OCI-LY7 (cell line): ENCODE measurements at regions of chr4 and their contacts with region 1.

Region 1: DNA sequence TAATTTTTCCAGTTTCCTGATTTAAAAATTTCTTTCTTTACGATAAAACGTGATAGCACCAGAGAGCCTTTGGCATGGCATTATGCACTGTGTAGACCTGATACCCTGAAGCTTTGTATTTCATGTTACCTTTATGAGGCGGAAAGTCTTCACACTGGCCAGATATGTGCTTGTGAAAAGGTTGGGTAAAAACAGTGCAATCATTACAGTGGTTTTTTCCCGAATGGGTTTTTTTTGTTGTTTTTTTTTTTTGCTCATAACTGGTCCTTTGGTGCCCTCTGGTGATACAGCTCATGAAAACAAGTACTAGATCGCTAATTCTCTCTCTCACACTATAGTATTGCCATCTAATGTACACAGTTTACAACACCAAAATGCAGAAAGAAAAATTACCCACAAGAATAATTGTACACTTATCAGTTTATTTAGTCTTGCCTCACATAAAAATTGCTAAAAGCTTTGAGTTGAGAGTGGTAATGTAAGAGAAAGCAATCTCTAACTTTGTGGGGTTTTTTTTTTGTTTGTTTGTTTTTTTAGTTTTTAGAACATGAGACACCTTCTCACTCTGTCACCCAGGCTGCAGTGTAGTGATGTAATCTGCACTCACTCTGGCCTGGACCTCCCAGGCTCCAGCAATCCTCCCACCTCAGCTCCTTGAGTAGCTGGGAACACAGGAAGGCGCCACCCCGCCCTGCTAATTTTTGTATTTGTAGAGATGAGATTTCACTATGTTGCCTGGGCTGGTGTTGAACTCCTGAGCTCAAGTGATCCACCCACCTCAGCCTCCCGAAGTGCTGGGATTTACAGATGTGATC is 21.3 kb downstream of the SPCS3 start:
- DNase-seq: peak; percentile 63
- H3K4me3 ChIP-seq: no peak overlapping the region
- H3K27ac ChIP-seq: no peak overlapping the region
- H3K4me1 ChIP-seq: peaks cover 10% of the 10 kb centered on the region
- CTCF ChIP-seq: peak; percentile 91

Region 2: GRCh38 chr4:175560604-175561003 is 780.5 kb before region 1 on chr4:
- CTCF ChIA-PET with region 1: no interaction called
- POLR2A ChIA-PET with region 1: no interaction called
- intact Hi-C with region 1: loop called (anchors 1 kb)
- DNase-seq: peak; percentile 58
- H3K4me3 ChIP-seq: no peak overlapping the region
- H3K27ac ChIP-seq: no peak overlapping the region
- H3K4me1 ChIP-seq: peaks cover 8% of the 10 kb centered on the region
- CTCF ChIP-seq: peak; percentile 77

Region 3: GRCh38 chr4:175947117-175947722 is 393.9 kb before region 1 on chr4:
- CTCF ChIA-PET with region 1: interaction called, 4 read pairs
- POLR2A ChIA-PET with region 1: interaction called, 3 read pairs
- intact Hi-C with region 1: loop called (anchors 1 kb)
- DNase-seq: peak; percentile 51
- H3K4me3 ChIP-seq: no peak overlapping the region
- H3K27ac ChIP-seq: no peak overlapping the region
- H3K4me1 ChIP-seq: peaks cover 7% of the 10 kb centered on the region
- CTCF ChIP-seq: peak; percentile 90

Region 4: GRCh38 chr4:176034499-176034898 is 306.6 kb before region 1 on chr4:
- CTCF ChIA-PET with region 1: no interaction called
- POLR2A ChIA-PET with region 1: interaction called, 3 read pairs
- intact Hi-C with region 1: loop called (anchors 1 kb)
- DNase-seq: peak; percentile 35
- H3K4me3 ChIP-seq: no peak overlapping the region
- H3K27ac ChIP-seq: no peak overlapping the region
- H3K4me1 ChIP-seq: peaks cover 4% of the 10 kb centered on the region
- CTCF ChIP-seq: peak; percentile 73

Region 5: DNA sequence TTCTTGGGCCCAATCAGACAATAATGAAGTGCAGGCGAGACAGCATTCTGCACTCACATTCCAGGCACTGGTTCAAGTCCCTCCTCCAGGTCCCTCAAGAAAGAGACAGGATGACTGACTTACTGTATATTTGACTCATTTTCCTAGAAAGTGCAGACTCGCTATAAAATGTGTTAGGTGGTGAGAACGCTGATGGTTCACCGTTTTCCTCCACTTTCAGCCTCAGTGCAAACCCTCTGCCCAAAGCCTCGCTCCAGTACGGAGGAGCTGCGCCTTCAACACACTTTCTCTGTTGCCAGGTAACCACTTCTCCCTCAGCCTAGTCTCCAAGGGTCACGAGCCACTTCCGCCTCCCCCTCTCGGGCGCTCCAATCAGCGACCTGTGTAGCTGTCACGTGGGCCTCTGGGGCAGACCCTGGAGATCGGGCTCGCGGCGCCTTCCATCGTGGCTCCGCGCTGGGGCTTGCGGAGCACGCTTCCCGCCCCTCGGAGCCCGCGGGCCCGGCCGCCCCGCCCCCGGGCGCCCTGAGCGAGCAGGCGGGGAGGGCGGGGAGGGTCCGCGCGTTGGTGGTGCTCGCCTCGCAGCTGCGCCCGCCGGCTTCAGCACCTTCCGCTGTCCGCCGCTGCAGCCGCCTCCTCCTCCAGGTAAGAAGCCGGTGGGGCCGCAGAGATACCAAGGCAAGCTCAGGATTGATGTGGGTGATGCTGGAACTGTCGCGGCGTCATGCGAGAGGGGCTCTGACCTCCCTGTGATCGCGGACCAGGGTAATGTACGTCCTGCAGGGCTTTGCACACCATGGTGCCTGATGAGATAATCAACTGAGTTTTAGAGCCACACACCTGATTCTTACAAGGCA is 275.4 kb before region 1 on chr4 and contains the start of gene WDR17:
- CTCF ChIA-PET with region 1: interaction called, 3 read pairs
- POLR2A ChIA-PET with region 1: no interaction called
- intact Hi-C with region 1: loop called (anchors 2 kb)
- DNase-seq: peak; percentile 90
- H3K4me3 ChIP-seq: peak within 1 kb of the TSS; percentile 69
- H3K27ac ChIP-seq: no peak within 1 kb of the TSS
- H3K4me1 ChIP-seq: no peaks in the 10 kb centered on the region
- CTCF ChIP-seq: no peak
- total RNA-seq, gene WDR17: 0.62 and 0.63 TPM in 2 replicates

Region 6: DNA sequence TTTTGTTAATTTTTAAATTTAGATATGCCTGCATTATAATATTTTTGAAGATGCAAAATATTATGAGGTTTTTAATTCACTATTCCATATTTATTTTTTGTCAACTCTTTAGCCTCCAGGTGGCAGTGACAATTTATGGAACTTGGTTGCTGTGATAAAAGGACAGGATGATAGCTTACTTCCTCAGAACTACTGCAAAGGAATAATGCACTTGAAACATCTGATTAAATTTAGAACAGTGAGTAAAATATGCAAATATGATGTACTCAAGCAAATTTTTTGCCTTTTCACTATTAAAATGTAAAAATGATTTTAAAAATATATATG is 190.8 kb before region 1 on chr4:
- CTCF ChIA-PET with region 1: interaction called, 4 read pairs
- POLR2A ChIA-PET with region 1: no interaction called
- intact Hi-C with region 1: loop called (anchors 1 kb)
- DNase-seq: peak; percentile 24
- H3K4me3 ChIP-seq: no peak overlapping the region
- H3K27ac ChIP-seq: no peak overlapping the region
- H3K4me1 ChIP-seq: peaks cover 5% of the 10 kb centered on the region
- CTCF ChIP-seq: peak; percentile 69

Region 7: GRCh38 chr4:176319704-176320339 is 21.3 kb before region 1 on chr4 and contains the start of gene SPCS3:
- CTCF ChIA-PET with region 1: no interaction called
- POLR2A ChIA-PET with region 1: interaction called, 16 read pairs
- intact Hi-C with region 1: no loop called
- DNase-seq: peak; percentile 98
- H3K4me3 ChIP-seq: peak within 1 kb of the TSS; percentile 99
- H3K27ac ChIP-seq: peak within 1 kb of the TSS; percentile 96
- H3K4me1 ChIP-seq: peaks cover 43% of the 10 kb centered on the region
- CTCF ChIP-seq: no peak
- total RNA-seq, gene SPCS3: 100 and 122 TPM in 2 replicates

Region 8: DNA sequence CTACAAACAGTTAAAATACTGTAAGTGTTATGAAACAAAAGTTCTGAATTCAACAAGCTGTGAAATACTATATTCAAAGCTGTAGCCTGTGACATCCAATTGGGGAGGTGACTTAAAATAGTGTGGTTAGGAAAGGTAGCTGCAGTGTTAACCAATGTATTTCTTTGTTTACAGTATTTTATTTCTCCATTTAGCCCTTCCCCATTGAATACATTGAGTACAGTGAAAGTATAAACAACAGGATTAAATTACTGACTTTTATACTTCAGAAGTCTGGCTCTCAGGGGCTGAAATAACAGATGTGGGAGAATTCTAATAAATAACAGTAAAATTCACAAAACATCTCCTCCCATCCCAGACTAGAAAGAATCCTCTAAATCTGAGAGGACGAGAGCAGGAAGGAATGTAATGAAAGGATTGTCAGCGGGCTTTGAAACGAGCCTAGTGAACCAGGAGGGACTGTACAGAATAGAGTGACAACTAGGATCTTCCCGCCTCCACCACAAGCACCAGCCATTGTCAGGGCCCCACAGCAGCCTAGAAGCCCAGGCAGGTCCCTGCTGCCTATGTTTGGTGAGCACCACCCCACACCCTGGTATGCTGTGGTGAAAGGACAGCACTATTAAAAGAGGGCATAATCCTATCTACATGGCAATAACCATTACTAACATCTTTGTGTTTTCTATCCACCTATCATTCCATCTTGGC is 52.4 kb after region 1 on chr4:
- CTCF ChIA-PET with region 1: no interaction called
- POLR2A ChIA-PET with region 1: no interaction called
- intact Hi-C with region 1: no loop called
- DNase-seq: no peak
- H3K4me3 ChIP-seq: no peak overlapping the region
- H3K27ac ChIP-seq: no peak overlapping the region
- H3K4me1 ChIP-seq: no peaks in the 10 kb centered on the region
- CTCF ChIP-seq: no peak